ENCODE measurements at regions of chr12 and their contacts with region 1.

Region 1: DNA sequence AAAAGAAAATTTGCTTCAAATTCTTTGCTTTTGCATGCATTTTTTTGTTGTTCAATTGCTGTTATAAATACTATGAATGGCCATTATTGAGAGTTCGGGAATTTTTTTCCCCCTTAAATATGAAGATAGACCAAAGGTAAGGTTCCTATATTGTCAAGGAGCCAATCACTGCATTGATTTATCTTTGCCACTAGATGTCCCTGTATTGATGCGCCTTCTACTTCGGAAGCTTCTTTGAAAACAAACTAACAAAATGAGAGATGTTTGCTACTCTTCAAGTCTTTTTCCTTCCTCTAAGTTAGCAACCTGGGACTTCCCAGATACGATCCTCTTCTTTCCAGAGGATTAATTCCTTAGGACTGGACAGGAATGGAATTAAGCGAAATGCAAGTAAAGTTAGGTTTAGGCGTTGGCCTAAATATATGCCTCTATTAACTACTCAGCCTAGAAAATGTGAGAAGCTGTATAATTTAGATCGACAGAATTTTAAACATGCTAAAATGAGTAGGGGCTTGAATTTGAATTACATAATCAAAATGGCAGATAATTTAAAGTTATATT is 318.1 kb downstream of the AEBP2 start:
- DNase-seq: no peak
- H3K4me3 ChIP-seq: no peak overlapping the region
- H3K27ac ChIP-seq: no peak overlapping the region
- H3K4me1 ChIP-seq: no peaks in the 10 kb centered on the region
- H3K27me3 ChIP-seq: no peaks in the 10 kb centered on the region
- CTCF ChIP-seq: peak; percentile 51 to 70 (median 64)
- EP300 ChIP-seq: no peak
- POLR2A ChIP-seq: no peak

Region 2: GRCh38 chr12:20011200-20011599 is 253.8 kb after region 1 on chr12:
- in situ Hi-C with region 1: no loop called
- intact Hi-C with region 1: no loop called
- DNase-seq: peak; percentile 69
- H3K4me3 ChIP-seq: no peak overlapping the region
- H3K27ac ChIP-seq: no peak overlapping the region
- H3K4me1 ChIP-seq: peaks cover 0 to 12% (median 7%) of the 10 kb centered on the region in 4 donors
- H3K27me3 ChIP-seq: no peaks in the 10 kb centered on the region
- CTCF ChIP-seq: no peak
- EP300 ChIP-seq: no peak
- POLR2A ChIP-seq: no peak

Region 3: GRCh38 chr12:20125276-20125798 is 367.9 kb after region 1 on chr12:
- in situ Hi-C with region 1: no loop called
- intact Hi-C with region 1: no loop called
- DNase-seq: no peak
- H3K4me3 ChIP-seq: no peak overlapping the region
- H3K27ac ChIP-seq: peak overlapping the region in 2 of 4 donors; percentile 7 to 8
- H3K4me1 ChIP-seq: peaks cover 0 to 4% (median 2%) of the 10 kb centered on the region in 4 donors
- H3K27me3 ChIP-seq: no peaks in the 10 kb centered on the region
- CTCF ChIP-seq: no peak
- EP300 ChIP-seq: no peak
- POLR2A ChIP-seq: no peak

Region 4: GRCh38 chr12:20212658-20213555 is 455.5 kb after region 1 on chr12:
- in situ Hi-C with region 1: loop called in 1 of 4 experiments (anchors 25 kb)
- intact Hi-C with region 1: no loop called
- DNase-seq: peak; percentile 65
- H3K4me3 ChIP-seq: no peak overlapping the region
- H3K27ac ChIP-seq: peak overlapping the region; percentile 46 to 80 (median 77)
- H3K4me1 ChIP-seq: peaks cover 10 to 37% (median 20%) of the 10 kb centered on the region in 4 donors
- H3K27me3 ChIP-seq: no peaks in the 10 kb centered on the region
- CTCF ChIP-seq: no peak
- EP300 ChIP-seq: no peak
- POLR2A ChIP-seq: no peak

Region 5: DNA sequence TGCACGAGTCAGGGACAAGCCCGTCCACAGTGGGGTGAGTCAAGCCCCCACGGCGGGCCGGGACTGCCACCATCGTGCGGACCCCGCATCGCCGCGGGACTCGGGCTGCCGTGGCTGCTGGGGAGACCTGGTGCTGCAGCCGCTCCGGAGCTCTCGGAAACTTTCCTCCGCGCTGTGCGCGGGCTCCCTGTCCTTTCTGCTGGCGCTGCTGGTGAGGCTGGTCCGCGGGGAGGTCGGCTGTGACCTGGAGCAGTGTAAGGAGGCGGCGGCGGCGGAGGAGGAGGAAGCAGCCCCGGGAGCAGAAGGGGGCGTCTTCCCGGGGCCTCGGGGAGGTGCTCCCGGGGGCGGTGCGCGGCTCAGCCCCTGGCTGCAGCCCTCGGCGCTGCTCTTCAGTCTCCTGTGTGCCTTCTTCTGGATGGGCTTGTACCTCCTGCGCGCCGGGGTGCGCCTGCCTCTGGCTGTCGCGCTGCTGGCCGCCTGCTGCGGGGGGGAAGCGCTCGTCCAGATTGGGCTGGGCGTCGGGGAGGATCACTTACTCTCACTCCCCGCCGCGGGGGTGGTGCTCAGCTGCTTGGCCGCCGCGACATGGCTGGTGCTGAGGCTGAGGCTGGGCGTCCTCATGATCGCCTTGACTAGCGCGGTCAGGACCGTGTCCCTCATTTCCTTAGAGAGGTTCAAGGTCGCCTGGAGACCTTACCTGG is 612.1 kb after region 1 on chr12:
- in situ Hi-C with region 1: loop called in 1 of 4 experiments (anchors 25 kb)
- intact Hi-C with region 1: no loop called
- DNase-seq: peak; percentile 84
- H3K4me3 ChIP-seq: peak overlapping the region; percentile 71 to 92 (median 83)
- H3K27ac ChIP-seq: peak overlapping the region; percentile 89 to 97 (median 94)
- H3K4me1 ChIP-seq: peaks cover 0 to 28% (median 3%) of the 10 kb centered on the region in 4 donors
- H3K27me3 ChIP-seq: peaks cover 11% of the 10 kb centered on the region
- CTCF ChIP-seq: peak; percentile 21 to 58 (median 28)
- EP300 ChIP-seq: no peak
- POLR2A ChIP-seq: peak; percentile 88

Measured in transverse colon (tissue), 4 donors.